ENCODE measurements at regions of chr5 and their contacts with region 1.

Region 1: DNA sequence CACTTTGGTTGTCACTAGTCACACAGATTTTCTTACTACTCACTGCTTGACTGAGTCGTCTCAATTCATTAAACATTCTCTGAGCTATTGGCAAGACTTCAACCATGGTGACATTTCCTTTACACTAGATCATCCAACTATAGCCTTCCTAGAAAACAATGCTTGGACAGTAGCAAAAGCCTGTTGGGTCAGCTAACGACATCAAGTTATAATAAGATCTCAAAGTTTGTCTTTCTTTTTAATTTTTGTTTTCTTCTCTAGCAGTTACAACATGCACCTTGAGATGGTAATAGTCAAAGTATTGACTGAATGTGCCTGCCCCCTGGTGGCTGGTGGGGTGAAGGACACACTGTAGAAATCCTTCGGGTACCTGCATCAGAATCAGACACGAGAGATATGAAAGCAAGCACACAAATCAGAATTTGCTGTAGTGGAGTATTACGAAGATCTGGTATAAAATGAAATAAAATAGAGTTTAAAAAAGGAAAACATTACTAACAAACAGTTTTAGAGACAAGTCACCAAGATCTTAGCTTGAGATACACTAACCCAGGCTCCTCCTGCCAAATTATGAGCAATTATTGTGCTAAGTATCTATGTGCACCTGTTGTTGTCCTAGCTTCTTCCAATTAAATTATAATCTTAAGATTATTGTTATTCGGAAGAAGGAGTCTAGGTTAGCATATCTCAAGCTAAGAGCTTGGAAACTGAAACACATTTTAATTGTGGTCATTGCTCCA is 81.2 kb downstream of the ARL15 start:
- DNase-seq: peak; percentile 54 to 77 (median 65)
- ATAC-seq: peak in 3 of 4 donors; percentile 63 to 76 (median 73)
- H3K4me3 ChIP-seq: no peak overlapping the region
- H3K27ac ChIP-seq: no peak overlapping the region
- H3K4me1 ChIP-seq: peaks cover 0 to 51% (median 21%) of the 10 kb centered on the region in 12 donors
- H3K27me3 ChIP-seq: no peaks in the 10 kb centered on the region
- CTCF ChIP-seq: peak; percentile 84 to 95 (median 91)
- POLR2A ChIP-seq: no peak

Region 2: DNA sequence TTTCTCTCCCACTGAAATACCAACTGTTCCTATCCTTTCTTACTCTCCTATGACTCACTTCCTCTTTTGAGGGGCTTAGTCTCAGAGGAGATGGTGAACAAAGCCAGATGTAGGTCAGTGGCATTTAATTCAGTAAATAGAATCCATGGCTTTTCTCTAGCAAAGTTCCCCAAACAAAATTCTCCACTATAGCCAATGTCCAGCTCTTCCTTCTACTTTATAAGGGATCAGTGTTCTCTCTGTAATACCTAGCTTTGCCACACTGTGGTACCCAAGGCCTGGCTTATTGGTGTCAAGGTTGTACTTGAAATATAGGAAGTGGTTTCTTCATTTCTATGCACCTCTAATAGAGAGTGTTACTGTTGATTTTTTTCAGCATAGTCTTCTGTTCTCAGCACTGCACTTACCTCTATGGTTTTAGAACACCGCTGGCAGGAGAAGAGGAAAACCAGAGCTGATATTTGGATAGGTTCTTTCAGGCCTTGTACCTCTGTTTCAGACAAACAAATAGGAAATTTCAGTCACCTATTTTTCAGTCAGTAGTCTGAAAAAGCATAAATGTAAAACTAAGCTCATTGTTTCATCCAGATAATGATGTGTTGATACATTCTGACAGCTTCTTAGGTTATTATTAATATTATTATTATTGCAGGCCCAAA is 1280.7 kb before region 1 on chr5:
- intact Hi-C with region 1: loop called in 1 of 10 experiments (anchors 5 kb)
- DNase-seq: peak in 4 of 5 donors; percentile 27 to 47 (median 36)
- ATAC-seq: peak; percentile 67 to 96 (median 90)
- H3K4me3 ChIP-seq: no peak overlapping the region
- H3K27ac ChIP-seq: peak overlapping the region in 3 of 12 donors; percentile 19 to 60 (median 38)
- H3K4me1 ChIP-seq: peaks cover 0 to 29% (median 6%) of the 10 kb centered on the region in 12 donors
- H3K27me3 ChIP-seq: no peaks in the 10 kb centered on the region
- CTCF ChIP-seq: peak; percentile 59 to 79 (median 76)
- POLR2A ChIP-seq: no peak

Region 3: DNA sequence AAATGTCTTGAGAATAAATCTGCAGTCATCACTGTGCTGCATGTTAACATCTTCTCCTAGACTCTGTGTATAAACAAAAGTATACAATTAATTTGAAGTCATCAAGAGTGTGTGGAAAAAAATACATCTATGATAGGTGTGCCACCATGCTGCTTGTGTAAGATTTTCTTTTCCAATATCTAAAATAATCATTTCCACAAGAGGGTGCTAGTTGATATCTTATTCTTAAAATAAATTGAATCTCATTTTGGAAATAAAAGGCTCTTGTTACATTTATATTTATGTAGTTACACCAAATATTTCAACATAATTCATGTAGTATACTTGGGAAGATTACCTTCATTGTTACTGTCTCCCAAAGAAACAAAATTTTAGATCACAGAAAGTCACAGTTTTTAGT is 1105.5 kb before region 1 on chr5:
- intact Hi-C with region 1: loop called in 2 of 10 experiments (anchors 10 kb)
- DNase-seq: no peak
- ATAC-seq: no peak
- H3K4me3 ChIP-seq: no peak overlapping the region
- H3K27ac ChIP-seq: no peak overlapping the region
- H3K4me1 ChIP-seq: no peaks in the 10 kb centered on the region
- H3K27me3 ChIP-seq: no peaks in the 10 kb centered on the region
- CTCF ChIP-seq: peak in 6 of 12 donors; percentile 19 to 38 (median 30)
- POLR2A ChIP-seq: no peak

Region 4: DNA sequence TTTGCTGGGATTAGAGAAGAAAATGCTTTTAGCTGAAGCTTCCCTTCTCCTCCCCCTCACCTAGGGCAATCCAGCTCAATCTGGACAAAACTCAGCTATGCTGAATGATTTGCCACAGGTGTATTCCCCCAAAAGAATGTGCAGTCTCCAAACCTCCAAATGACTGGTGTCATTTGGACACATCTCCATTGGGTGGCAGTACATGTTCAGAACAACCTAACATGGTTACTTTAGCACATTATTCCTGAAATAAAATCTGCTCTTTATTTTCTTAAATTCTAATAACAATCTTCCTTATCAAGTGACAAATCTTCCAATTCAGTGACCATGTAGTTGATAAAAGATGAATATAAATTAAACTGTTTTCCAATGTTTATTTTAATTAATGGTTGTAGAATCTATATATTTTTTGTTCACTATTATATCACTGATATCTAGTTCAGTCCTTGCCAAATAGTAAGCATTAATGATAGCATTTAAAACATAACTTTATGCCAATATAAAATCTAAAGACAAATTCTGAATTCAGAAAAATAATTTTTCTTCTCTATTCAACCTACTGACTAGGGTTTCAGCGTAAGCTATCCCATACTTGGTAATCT is 1058.4 kb before region 1 on chr5:
- intact Hi-C with region 1: loop called in 8 of 10 experiments (anchors 5 to 10 kb)
- DNase-seq: no peak
- ATAC-seq: peak in 1 of 4 donors; percentile 62
- H3K4me3 ChIP-seq: no peak overlapping the region
- H3K27ac ChIP-seq: no peak overlapping the region
- H3K4me1 ChIP-seq: peaks cover 0 to 25% (median 5%) of the 10 kb centered on the region in 12 donors
- H3K27me3 ChIP-seq: peaks cover 0 to 4% (median 0%) of the 10 kb centered on the region in 9 donors
- CTCF ChIP-seq: peak; percentile 32 to 66 (median 54)
- POLR2A ChIP-seq: no peak

Region 5: GRCh38 chr5:53262348-53262970 is 966.8 kb before region 1 on chr5:
- intact Hi-C with region 1: loop called in 1 of 10 experiments (anchors 10 kb)
- DNase-seq: no peak
- ATAC-seq: no peak
- H3K4me3 ChIP-seq: no peak overlapping the region
- H3K27ac ChIP-seq: no peak overlapping the region
- H3K4me1 ChIP-seq: peaks cover 0 to under 1% (median 0%) of the 10 kb centered on the region in 12 donors
- H3K27me3 ChIP-seq: no peaks in the 10 kb centered on the region
- CTCF ChIP-seq: peak in 7 of 12 donors; percentile 18 to 54 (median 47)
- POLR2A ChIP-seq: no peak

Region 6: DNA sequence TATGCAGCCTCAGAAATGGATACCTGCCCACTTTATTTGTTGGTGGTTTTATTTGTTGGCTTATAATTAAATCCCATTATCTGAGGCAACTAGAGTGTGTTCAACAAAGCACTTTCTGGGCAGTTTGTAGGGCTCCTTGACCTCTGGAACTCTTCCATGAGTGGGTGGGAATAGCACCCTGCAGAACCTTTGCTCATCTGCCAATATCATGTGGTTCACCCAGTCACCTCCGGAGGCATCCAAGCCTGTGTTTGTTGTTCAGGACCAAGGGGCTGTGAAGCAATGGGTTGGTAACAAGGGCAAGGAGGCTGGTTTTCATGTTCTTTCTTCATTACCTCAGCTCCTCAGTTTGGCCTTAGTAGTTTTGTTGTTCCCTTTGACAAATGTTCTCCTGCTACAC is 354.8 kb before region 1 on chr5:
- intact Hi-C with region 1: loop called in 1 of 10 experiments (anchors 10 kb)
- DNase-seq: no peak
- ATAC-seq: no peak
- H3K4me3 ChIP-seq: no peak overlapping the region
- H3K27ac ChIP-seq: no peak overlapping the region
- H3K4me1 ChIP-seq: no peaks in the 10 kb centered on the region
- H3K27me3 ChIP-seq: no peaks in the 10 kb centered on the region
- CTCF ChIP-seq: peak in 1 of 12 donors; percentile 5
- POLR2A ChIP-seq: no peak

Measured in heart left ventricle (tissue), 16 donors.